ENCODE measurements at regions of chr6 and their contacts with region 1.

Region 1: GRCh38 chr6:133553652-133554051 is 312.5 kb downstream of the EYA4 start:
- DNase-seq: no peak
- ATAC-seq: peak in 1 of 4 donors; percentile 55
- H3K4me3 ChIP-seq: no peak overlapping the region
- H3K27ac ChIP-seq: peak overlapping the region; percentile 82
- H3K4me1 ChIP-seq: peaks cover 28% of the 10 kb centered on the region
- H3K27me3 ChIP-seq: no peaks in the 10 kb centered on the region
- CTCF ChIP-seq: peak; percentile 73

Region 2: GRCh38 chr6:132820629-132821381 is 732.8 kb before region 1 on chr6:
- intact Hi-C with region 1: loop called in 1 of 2 experiments (anchors 5 kb)
- DNase-seq: no peak
- ATAC-seq: peak; percentile 35 to 61 (median 43)
- H3K4me3 ChIP-seq: no peak overlapping the region
- H3K27ac ChIP-seq: peak overlapping the region; percentile 13
- H3K4me1 ChIP-seq: peaks cover 44% of the 10 kb centered on the region
- H3K27me3 ChIP-seq: no peaks in the 10 kb centered on the region
- CTCF ChIP-seq: no peak

Region 3: DNA sequence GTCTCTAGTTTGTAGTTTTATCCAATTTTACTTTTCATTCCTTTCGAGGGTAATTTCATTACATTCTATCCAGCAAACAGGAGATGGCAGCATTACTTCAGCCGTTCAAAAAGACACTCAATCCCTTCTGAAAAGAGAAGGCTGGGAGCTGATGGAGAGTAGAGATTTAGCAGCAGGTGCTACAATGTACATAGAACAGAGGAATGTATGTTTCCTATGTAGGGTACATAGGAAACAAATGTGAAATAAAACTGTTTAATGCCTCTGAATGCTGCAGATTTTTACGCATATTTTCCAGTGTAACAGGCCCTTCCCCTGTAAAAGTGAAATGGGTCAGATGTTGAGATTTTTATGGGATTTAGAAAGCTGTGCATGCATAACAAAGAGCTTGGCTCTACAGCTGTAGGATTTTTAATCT is 723.3 kb before region 1 on chr6:
- intact Hi-C with region 1: loop called in 1 of 2 experiments (anchors 2 kb)
- DNase-seq: no peak
- ATAC-seq: peak; percentile 47 to 64 (median 54)
- H3K4me3 ChIP-seq: no peak overlapping the region
- H3K27ac ChIP-seq: no peak overlapping the region
- H3K4me1 ChIP-seq: no peaks in the 10 kb centered on the region
- H3K27me3 ChIP-seq: no peaks in the 10 kb centered on the region
- CTCF ChIP-seq: peak; percentile 59

Region 4: GRCh38 chr6:133184798-133185372 is 368.8 kb before region 1 on chr6:
- intact Hi-C with region 1: loop called in 1 of 2 experiments (anchors 10 kb)
- DNase-seq: no peak
- ATAC-seq: peak in 3 of 4 donors; percentile 19 to 60 (median 44)
- H3K4me3 ChIP-seq: no peak overlapping the region
- H3K27ac ChIP-seq: no peak overlapping the region
- H3K4me1 ChIP-seq: no peaks in the 10 kb centered on the region
- H3K27me3 ChIP-seq: no peaks in the 10 kb centered on the region
- CTCF ChIP-seq: peak; percentile 67

Region 5: GRCh38 chr6:133277900-133278545 is 275.6 kb before region 1 on chr6:
- intact Hi-C with region 1: no loop called
- DNase-seq: no peak
- ATAC-seq: peak; percentile 60 to 68 (median 64)
- H3K4me3 ChIP-seq: peak overlapping the region; percentile 33
- H3K27ac ChIP-seq: peak overlapping the region; percentile 60
- H3K4me1 ChIP-seq: peaks cover 19% of the 10 kb centered on the region
- H3K27me3 ChIP-seq: no peaks in the 10 kb centered on the region
- CTCF ChIP-seq: no peak

Measured in psoas muscle (tissue), 8 donors.